ENCODE measurements at regions of chr5 and their contacts with region 1.

Region 1: DNA sequence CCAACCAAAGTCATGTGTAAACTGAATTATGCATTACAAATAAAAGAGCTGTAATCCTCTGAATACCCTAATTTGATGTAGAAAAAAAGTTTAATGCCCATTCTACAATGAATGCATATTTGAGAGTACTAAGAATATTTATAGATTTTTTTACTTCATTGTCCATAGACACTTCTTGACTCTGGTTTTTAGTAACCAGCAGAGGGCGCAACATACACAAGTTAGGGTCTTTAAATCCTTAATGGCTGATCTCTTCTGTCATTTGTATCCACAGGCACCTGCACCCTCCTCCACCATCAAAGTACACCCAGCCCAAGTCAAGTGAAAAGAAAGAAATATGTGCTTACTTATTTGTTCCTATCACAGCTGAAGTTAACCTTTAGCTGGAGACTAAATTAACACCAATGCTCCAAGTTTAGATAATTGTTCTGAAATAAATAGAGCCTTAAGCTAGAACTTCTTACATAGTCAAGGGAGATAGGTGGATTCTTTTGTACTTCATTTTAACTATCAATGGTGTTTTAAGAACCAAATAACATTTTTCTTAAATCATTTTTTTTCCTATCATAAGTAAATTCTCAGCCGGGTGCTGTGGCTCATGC is 524.2 kb upstream of the DAB2 start:
- DNase-seq: peak; percentile 79
- H3K4me3 Mint-ChIP-seq: no peak overlapping the region
- H3K27ac Mint-ChIP-seq: no peak overlapping the region
- H3K4me1 Mint-ChIP-seq: peaks cover 5% of the 10 kb centered on the region
- H3K27me3 Mint-ChIP-seq: no peaks in the 10 kb centered on the region

Region 2: DNA sequence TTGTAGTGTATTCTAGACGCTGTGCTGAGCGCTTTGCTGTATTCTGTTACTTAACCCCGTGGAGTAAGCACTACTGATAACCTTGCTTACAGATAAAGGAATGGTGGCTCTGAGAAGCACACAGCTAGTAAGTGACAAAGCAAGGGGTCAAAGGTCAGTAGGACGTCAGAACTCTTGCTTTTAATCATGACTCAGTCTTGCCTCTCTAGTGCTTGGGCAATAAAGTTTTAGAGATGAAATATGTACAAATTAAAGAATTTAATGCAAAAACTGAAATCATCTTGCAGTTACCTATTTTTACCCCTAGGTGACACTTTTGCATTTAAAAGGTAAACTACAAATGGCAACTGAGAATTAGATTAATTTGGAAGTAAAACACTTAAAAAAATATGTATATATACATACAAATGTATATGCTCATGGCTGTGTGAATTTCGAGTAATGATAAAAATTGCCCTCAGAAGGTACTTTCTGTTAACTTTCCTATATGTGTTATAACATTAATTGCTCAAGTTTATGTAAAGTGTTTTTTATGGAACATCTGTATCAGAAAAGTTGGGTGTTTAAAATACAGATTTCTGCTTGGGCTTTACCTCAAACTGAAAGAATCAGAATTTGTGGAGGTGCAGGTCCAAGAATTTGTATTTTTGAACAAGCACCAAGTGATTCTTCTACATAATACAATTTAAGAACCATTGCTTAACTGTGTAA is 349.1 kb before region 1 on chr5:
- CTCF ChIA-PET with region 1: no interaction called
- intact Hi-C with region 1: loop called (anchors 5 kb)
- DNase-seq: no peak
- H3K4me3 Mint-ChIP-seq: no peak overlapping the region
- H3K27ac Mint-ChIP-seq: no peak overlapping the region
- H3K4me1 Mint-ChIP-seq: no peaks in the 10 kb centered on the region
- H3K27me3 Mint-ChIP-seq: peaks cover 11% of the 10 kb centered on the region

Region 3: GRCh38 chr5:40165794-40166728 is 217.1 kb after region 1 on chr5:
- CTCF ChIA-PET with region 1: interaction called, 4 read pairs
- intact Hi-C with region 1: loop called (anchors 5 kb)
- DNase-seq: peak; percentile 61
- H3K4me3 Mint-ChIP-seq: no peak overlapping the region
- H3K27ac Mint-ChIP-seq: peak overlapping the region; percentile 14
- H3K4me1 Mint-ChIP-seq: peaks cover 9% of the 10 kb centered on the region
- H3K27me3 Mint-ChIP-seq: no peaks in the 10 kb centered on the region

Region 4: DNA sequence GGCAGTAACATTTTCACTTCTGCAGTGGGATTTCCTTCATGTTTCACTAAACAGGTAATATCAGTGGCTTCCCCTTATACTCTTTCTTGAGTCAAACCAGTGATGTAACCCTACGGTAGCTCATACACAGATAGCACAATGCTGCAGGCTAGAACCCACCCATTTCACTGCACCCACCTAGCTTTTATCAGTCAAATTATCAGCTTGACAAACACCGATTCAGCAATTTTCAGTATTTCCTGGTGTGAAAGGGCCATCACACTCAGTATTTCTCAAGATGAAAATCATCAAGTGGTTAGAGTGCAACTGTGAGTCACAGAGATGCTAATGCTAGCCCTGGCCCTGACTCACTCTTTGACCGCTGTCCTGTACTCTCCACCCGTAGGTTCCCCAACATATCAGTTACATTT is 488.5 kb after region 1 on chr5:
- CTCF ChIA-PET with region 1: no interaction called
- intact Hi-C with region 1: loop called (anchors 2 kb)
- DNase-seq: peak; percentile 19
- H3K4me3 Mint-ChIP-seq: no peak overlapping the region
- H3K27ac Mint-ChIP-seq: peak overlapping the region; percentile 94
- H3K4me1 Mint-ChIP-seq: peaks cover 81% of the 10 kb centered on the region
- H3K27me3 Mint-ChIP-seq: no peaks in the 10 kb centered on the region

Region 5: DNA sequence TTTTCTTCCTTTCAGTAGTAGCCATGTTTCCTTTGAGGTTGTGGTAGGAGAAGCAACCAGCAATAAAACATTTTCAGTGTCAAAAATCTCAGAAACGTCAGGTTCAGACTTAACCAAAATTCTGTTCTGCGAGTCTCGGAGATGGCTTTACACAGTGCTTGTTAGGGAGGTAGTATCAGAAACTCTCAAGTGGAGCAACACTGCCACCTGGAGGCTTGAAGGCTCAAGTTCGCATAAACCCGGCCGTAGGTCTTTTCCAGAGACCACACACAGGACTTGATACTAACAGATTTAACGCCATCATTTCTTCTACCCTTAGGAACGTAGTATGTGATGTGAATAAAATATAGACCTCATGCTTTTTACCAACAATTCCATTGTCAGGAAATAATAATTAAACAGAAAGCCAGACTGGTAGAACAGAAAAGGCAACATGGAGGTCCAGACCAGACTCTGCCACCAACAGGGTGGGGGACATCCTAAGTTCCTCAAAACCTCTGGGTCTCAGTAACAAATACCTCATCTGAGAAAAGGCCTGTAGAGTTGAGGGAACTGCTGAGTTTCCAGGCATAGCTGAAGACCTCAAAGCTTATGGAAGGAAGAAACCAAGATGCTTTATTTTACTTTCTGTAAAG is 739.3 kb after region 1 on chr5:
- CTCF ChIA-PET with region 1: interaction called, 11 read pairs
- intact Hi-C with region 1: loop called (anchors 1 kb)
- DNase-seq: peak; percentile 95
- H3K4me3 Mint-ChIP-seq: peak overlapping the region; percentile 89
- H3K27ac Mint-ChIP-seq: peak overlapping the region; percentile 99
- H3K4me1 Mint-ChIP-seq: peaks cover 64% of the 10 kb centered on the region
- H3K27me3 Mint-ChIP-seq: no peaks in the 10 kb centered on the region

Region 6: DNA sequence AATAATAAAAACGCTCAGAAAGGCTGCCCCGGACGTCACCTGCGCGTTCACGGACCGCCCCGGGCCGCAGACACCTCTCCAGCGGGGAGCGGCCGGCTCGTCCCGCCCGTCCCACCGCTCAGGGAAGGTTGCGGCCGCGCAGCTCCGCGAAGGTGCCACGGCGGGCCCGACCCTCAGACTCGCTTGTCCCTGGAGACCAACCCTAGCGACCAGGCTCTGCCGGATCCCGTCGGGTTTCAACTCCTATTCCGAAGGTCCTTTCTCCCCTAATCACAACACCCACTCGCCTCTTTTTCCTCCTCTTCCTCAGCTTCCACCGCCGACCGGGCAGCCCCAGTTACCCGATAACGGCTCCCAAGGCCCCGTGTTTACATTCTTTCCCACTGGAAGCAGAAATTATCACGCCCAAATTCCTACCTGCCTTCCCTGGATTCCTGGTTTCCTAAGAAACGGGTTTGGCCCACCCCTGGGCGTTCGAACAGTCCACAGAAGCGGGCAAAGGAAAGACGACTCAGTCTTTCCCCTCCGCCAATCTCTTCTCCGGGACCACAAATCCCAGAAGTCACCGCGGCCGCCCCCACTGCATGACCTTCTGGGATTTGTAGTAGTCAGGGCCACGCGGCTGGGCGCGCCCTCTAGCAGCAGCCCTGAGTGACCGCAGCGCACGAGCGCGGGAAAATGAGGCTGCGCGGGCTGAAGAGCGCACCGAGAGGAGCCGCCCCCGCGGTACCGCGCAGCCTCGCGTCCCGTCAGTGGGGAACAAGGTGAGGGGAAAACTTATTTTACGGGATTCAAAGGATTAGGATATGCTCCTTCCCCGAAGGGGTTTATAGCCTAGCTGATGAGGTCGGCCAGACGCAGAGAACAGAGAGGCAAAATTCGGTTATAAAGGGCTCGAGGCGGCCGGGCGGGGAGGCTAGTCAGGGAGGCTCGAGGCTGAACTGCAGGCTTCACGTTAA is 806.7 kb after region 1 on chr5 and contains the start of gene TTC33:
- CTCF ChIA-PET with region 1: no interaction called
- intact Hi-C with region 1: loop called (anchors 1 kb)
- DNase-seq: peak; percentile 98
- H3K4me3 Mint-ChIP-seq: no peak within 1 kb of the TSS
- H3K27ac Mint-ChIP-seq: no peak within 1 kb of the TSS
- H3K4me1 Mint-ChIP-seq: peaks cover 10% of the 10 kb centered on the region
- H3K27me3 Mint-ChIP-seq: no peaks in the 10 kb centered on the region
- total RNA-seq, gene TTC33: 24.4 to 27.4 TPM